Ovary (tissue), 10 donors: ENCODE measurements at regions of chr12 and their contacts with region 1.

Region 1: DNA sequence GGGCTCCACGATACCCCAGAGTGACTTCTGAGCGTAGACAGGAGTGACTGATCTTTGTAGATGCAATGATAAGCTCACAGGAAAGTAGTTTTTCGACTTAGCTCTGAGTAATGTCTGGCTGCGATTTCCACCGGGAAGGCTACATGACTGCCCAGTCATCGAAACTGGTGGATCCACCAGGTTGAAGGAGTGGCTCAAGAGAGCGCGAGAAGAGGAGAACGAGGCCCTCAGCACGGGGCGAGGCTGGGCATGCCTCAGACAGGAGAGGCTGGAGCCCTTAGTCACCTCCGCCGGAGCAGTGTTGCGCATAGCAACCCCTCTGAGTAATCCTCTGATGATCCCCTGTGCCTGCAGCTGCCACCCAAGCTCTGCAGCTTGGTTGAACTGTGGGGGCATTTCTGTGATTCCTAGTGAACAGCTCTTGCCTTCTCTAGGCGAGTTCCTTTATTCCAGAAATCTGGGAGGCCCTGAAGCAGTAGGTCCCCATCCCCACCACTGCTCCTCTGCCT is 25.6 kb downstream of the ELK3 start:
- DNase-seq: no peak
- H3K4me3 ChIP-seq: no peak overlapping the region
- H3K27ac ChIP-seq: no peak overlapping the region
- H3K4me1 ChIP-seq: no peaks in the 10 kb centered on the region
- H3K27me3 ChIP-seq: no peaks in the 10 kb centered on the region
- CTCF ChIP-seq: no peak
- EP300 ChIP-seq: no peak
- POLR2A ChIP-seq: no peak

Region 2: GRCh38 chr12:96061864-96062453 is 157.8 kb before region 1 on chr12:
- intact Hi-C with region 1: loop called (anchors 5 kb)
- DNase-seq: peak; percentile 41 to 74 (median 67)
- H3K4me3 ChIP-seq: no peak overlapping the region
- H3K27ac ChIP-seq: no peak overlapping the region
- H3K4me1 ChIP-seq: no peaks in the 10 kb centered on the region
- H3K27me3 ChIP-seq: no peaks in the 10 kb centered on the region
- CTCF ChIP-seq: peak; percentile 34 to 70 (median 60)
- EP300 ChIP-seq: no peak
- POLR2A ChIP-seq: no peak

Region 3: DNA sequence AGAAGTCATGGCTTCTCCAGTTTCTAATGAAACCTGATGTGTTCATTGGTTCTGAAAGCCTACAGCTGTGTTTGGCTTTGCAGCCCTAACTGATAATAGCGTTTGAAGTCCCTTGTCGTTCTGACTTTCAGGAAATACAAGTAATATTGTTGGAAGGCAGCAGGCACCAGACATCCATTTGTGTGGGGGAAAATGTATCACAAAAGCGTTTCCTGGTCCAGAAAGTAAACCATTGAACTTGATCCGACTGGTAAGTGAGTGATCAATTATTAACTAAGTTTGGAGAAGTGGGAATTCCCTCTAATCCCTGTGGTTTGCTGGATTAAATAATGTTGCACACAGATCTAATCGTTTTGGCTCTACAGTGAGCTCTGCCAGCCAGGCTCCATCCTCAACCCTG is 107.0 kb before region 1 on chr12:
- intact Hi-C with region 1: no loop called
- DNase-seq: no peak
- H3K4me3 ChIP-seq: no peak overlapping the region
- H3K27ac ChIP-seq: no peak overlapping the region
- H3K4me1 ChIP-seq: no peaks in the 10 kb centered on the region
- H3K27me3 ChIP-seq: no peaks in the 10 kb centered on the region
- CTCF ChIP-seq: no peak
- EP300 ChIP-seq: no peak
- POLR2A ChIP-seq: no peak

Region 4: DNA sequence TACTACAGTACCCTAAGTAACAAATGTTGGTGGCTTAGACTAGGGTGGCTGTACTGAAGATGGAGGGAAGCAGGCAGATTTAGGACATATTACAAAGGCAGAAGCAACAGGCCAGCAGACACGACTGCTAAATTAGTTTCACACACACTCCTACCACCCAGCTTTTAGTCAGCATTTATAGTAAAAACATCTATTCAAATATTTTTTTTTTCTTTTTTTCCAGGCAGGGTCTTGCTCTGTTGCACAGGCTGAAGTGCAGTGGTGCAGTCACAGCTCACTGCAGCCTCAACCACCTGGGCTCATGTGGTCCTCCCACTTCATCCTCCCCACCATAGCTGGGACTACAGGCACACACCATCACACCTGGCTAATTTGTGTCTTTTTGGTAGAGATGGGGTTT is 107.6 kb after region 1 on chr12:
- intact Hi-C with region 1: no loop called
- DNase-seq: no peak
- H3K4me3 ChIP-seq: no peak overlapping the region
- H3K27ac ChIP-seq: no peak overlapping the region
- H3K4me1 ChIP-seq: no peaks in the 10 kb centered on the region
- H3K27me3 ChIP-seq: no peaks in the 10 kb centered on the region
- CTCF ChIP-seq: no peak
- EP300 ChIP-seq: no peak
- POLR2A ChIP-seq: no peak

Region 5: DNA sequence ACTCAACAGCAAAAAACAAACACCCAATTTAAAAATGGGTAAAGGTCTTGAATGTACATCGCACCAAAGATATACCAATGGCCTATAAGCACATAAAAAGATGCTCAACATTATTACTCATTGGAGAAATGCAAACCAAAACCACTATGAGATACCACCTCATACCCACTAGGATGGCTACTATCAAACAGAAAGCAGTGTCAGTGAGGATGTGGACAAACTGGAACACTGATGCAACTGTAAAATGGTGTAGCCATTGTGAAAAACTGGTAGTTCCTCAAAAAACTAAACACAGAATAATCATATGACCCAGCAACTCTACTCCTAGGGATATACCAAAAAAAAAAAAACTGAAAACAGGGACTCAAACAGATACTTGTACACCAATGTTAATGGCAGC is 131.2 kb after region 1 on chr12:
- intact Hi-C with region 1: no loop called
- DNase-seq: no peak
- H3K4me3 ChIP-seq: no peak overlapping the region
- H3K27ac ChIP-seq: no peak overlapping the region
- H3K4me1 ChIP-seq: peaks cover 8% of the 10 kb centered on the region
- H3K27me3 ChIP-seq: no peaks in the 10 kb centered on the region
- CTCF ChIP-seq: no peak
- EP300 ChIP-seq: no peak
- POLR2A ChIP-seq: no peak

Region 6: DNA sequence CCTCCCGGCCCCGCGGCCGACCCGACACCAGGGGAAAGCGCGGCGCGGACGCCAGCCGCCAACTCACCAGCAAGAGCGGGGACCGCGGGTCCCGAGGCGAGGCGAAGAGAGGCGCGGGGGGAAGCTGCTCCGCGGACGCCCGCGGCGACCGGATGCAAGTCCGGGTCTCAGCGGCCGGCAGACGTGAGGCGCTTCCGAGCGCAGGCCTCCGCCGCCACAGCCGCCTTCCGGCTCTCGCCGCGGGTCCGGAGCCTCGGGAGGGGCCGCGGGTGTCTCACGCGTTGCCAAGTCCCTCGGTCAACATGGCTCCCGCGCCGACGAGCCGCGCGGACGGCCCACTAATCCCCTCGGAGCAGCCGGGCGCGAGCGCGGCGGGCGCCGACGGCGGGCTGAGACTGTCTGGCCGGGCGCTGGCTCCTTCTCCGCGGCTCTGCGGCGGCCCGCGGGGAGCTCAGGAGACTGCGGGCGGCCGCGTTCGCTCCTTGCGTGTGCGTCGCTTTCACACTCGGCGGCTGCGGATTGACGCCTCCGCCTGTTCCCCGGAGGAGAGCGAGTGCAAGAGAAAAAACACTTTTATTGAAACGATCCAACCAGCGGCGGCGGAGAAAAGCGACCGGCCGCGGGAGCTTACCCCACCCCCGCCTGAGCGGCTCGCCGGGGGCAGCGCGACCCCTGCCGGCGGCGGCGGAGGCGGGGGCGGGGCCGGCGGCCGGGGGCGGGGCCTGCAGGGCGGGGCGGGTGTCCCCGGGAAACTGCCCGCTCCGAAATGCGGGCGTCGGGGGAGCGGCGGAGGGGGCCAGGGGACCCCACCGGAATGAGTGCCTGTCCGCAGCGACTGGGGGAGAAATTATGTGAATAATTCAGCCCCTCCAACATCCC is 180.4 kb after region 1 on chr12 and contains the start of gene CDK17:
- intact Hi-C with region 1: loop called in 2 of 4 experiments (anchors 10 kb)
- DNase-seq: peak; percentile 80 to 89 (median 88)
- H3K4me3 ChIP-seq: peak within 1 kb of the TSS; percentile 94
- H3K27ac ChIP-seq: peak within 1 kb of the TSS; percentile 96
- H3K4me1 ChIP-seq: no peaks in the 10 kb centered on the region
- H3K27me3 ChIP-seq: no peaks in the 10 kb centered on the region
- CTCF ChIP-seq: peak in 2 of 3 donors; percentile 59 to 62
- EP300 ChIP-seq: no peak
- POLR2A ChIP-seq: peak; percentile 82
- total RNA-seq, gene CDK17: 28.0 to 59.2 (median 31.4) TPM

Region 7: DNA sequence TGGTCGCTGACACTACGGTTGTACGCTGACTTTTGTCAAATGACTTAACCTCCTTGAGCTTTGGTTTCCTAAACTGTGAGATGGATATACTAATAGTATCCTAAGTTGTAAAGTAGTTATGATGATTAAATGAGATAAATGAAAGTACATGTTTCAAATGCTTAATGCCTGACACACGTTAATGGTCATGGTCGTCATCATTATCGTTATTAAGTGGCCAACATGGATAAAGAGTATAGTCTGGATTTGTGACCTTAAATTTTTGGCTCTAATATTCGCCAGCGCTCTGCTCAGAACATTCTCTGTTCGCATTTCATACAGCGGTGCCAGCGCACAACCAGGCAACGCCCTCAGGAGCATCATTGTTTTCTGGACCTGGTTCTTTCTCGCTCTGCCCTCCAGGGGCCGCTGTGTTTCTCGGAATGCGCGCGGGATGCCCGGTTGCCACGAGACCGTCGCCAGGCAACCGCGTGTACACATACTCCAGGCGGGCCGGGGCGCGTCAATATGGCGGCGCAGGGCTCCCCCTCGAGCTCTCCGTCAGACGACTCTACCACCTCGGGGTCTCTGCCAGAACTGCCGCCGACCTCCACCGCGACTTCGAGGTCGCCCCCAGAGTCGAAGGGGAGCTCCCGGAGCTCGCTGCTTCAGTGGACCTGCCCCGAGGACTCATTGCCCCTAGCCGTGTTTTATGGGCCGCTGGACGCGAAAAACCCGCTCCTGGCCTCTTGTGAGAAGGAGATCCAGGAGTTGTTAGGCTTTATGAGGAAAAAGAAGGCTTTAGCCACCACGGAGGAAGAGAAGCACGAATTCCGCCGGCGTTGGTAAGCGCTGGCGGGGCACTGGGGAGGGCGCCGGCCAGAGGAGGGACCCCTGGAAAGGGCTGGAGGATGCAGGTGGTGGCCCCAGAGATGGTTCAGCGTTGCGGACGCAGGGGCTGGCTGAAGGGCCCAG is 269.6 kb after region 1 on chr12 and contains the start of gene CFAP54:
- intact Hi-C with region 1: loop called in 1 of 4 experiments (anchors 10 kb)
- DNase-seq: peak; percentile 87 to 96 (median 94)
- H3K4me3 ChIP-seq: peak within 1 kb of the TSS; percentile 54
- H3K27ac ChIP-seq: peak within 1 kb of the TSS in 1 of 2 donors; percentile 0
- H3K4me1 ChIP-seq: peaks cover 2% of the 10 kb centered on the region
- H3K27me3 ChIP-seq: no peaks in the 10 kb centered on the region
- CTCF ChIP-seq: peak; percentile 80 to 87 (median 87)
- EP300 ChIP-seq: peak; percentile 84
- POLR2A ChIP-seq: peak; percentile 38
- total RNA-seq, gene CFAP54: 0.58 to 29.8 (median 2.1) TPM